ENCODE measurements at regions of chr7 and their contacts with region 1.

Region 1: DNA sequence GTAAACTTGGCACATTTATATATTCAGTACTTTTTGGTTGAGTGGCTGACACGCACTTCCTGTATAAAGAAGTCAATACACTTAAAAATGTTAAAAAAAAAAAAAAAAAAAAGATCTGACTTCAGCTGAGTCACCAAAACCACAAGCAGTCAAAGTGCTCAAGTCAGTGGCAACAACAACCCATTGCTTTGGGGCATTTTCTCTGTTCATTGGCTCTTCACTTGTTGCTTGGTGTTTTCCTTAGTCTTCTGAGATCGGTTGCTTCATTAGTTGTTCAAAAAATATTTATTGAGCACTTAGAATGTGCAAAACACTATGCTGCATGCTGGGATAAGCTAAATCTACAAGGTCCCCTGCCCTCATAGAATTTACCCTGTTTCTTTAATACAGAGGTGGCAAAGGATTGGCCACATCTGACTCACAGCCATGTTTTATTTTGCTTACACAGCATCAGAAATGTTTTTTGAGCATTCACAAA is 63.7 kb downstream of the ZNRF2 start:
- DNase-seq: peak in 13 of 14 experiments; percentile 12 to 93 (median 35)
- ATAC-seq: peak; percentile 88
- H3K4me3 ChIP-seq: peak overlapping the region; percentile 24
- H3K4me3 Mint-ChIP-seq: peak overlapping the region; percentile 31
- H3K27ac ChIP-seq: peak overlapping the region; percentile 7 to 20
- H3K27ac Mint-ChIP-seq: peak overlapping the region; percentile 93
- H3K4me1 ChIP-seq: peaks cover 14% of the 10 kb centered on the region
- H3K4me1 Mint-ChIP-seq: peaks cover 64% of the 10 kb centered on the region
- H3K27me3 ChIP-seq: no peaks in the 10 kb centered on the region
- H3K27me3 Mint-ChIP-seq: no peaks in the 10 kb centered on the region
- CTCF ChIP-seq: no peak

Region 2: DNA sequence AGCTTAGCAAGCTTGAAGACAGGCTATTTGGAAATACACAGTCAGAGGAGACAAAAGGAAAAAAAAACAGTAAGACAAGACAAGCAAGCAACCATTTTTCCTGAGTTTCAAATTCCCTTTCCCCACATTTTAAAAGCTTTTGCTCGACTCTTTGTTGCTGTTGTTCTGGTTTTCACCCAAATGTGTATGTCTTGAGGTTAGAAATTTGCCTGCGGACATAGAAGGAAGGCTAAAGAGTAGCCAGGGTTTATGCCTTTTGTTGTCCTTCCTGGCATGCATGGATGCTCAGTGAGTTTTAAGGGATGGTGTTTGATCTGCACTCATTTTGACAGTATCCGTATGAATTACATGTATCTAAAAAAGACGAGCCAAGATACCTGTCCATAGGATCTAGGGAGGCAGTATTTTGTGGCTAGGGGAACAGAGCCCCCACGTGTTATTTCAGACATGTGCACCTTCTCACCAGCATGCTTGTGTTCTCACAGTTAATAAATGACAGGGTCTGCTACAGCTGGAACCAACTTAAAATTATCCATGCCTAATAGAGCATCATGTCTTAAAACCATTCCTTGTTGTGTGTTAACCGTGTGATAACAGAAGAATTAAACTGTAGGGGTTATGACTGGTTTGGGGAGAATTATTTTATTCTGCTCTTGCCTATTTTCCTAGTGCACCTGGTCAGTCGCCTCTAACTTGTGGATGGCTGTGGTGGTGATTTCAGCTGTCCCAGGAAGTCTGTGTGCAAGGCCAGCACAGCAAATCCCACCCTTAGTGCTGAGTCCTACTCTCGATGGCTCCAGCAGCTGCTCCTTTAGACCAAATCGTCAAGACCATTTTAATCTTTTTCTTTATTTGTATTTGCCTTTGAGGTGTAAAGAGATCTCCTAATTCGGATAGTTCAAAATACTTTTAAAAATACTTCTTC is 532.7 kb before region 1 on chr7:
- CTCF ChIA-PET with region 1: no interaction called
- POLR2A ChIA-PET with region 1: no interaction called
- intact Hi-C with region 1: no loop called
- DNase-seq: no peak
- ATAC-seq: no peak
- H3K4me3 ChIP-seq: no peak overlapping the region
- H3K4me3 Mint-ChIP-seq: no peak overlapping the region
- H3K27ac ChIP-seq: no peak overlapping the region
- H3K27ac Mint-ChIP-seq: no peak overlapping the region
- H3K4me1 ChIP-seq: no peaks in the 10 kb centered on the region
- H3K4me1 Mint-ChIP-seq: no peaks in the 10 kb centered on the region
- H3K27me3 ChIP-seq: peaks cover 7 to 13% of the 10 kb centered on the region in 2 experiments
- H3K27me3 Mint-ChIP-seq: peaks cover 48% of the 10 kb centered on the region
- CTCF ChIP-seq: no peak

Region 3: GRCh38 chr7:30026229-30027064 is 321.7 kb before region 1 on chr7 and contains the start of gene FKBP14:
- CTCF ChIA-PET with region 1: no interaction called
- POLR2A ChIA-PET with region 1: interaction called, 6 read pairs
- intact Hi-C with region 1: loop called (anchors 5 kb)
- DNase-seq: peak; percentile 76 to 97 (median 88)
- ATAC-seq: peak; percentile 82
- H3K4me3 ChIP-seq: peak within 1 kb of the TSS; percentile 70
- H3K4me3 Mint-ChIP-seq: peak within 1 kb of the TSS; percentile 90
- H3K27ac ChIP-seq: peak within 1 kb of the TSS; percentile 36 to 50
- H3K27ac Mint-ChIP-seq: peak within 1 kb of the TSS; percentile 80
- H3K4me1 ChIP-seq: peaks cover 14% of the 10 kb centered on the region
- H3K4me1 Mint-ChIP-seq: peaks cover 42% of the 10 kb centered on the region
- H3K27me3 ChIP-seq: no peaks in the 10 kb centered on the region
- H3K27me3 Mint-ChIP-seq: no peaks in the 10 kb centered on the region
- CTCF ChIP-seq: no peak
- total RNA-seq, gene FKBP14: 4.3 to 5.2 TPM

Region 4: GRCh38 chr7:30164567-30164966 is 183.6 kb before region 1 on chr7:
- CTCF ChIA-PET with region 1: no interaction called
- POLR2A ChIA-PET with region 1: no interaction called
- intact Hi-C with region 1: loop called (anchors 5 to 10 kb)
- DNase-seq: peak in 3 of 14 experiments; percentile 43 to 51 (median 46)
- ATAC-seq: no peak
- H3K4me3 ChIP-seq: no peak overlapping the region
- H3K4me3 Mint-ChIP-seq: no peak overlapping the region
- H3K27ac ChIP-seq: no peak overlapping the region
- H3K27ac Mint-ChIP-seq: no peak overlapping the region
- H3K4me1 ChIP-seq: peaks cover 13% of the 10 kb centered on the region
- H3K4me1 Mint-ChIP-seq: peaks cover 36% of the 10 kb centered on the region
- H3K27me3 ChIP-seq: no peaks in the 10 kb centered on the region
- H3K27me3 Mint-ChIP-seq: no peaks in the 10 kb centered on the region
- CTCF ChIP-seq: peak; percentile 34

Region 5: DNA sequence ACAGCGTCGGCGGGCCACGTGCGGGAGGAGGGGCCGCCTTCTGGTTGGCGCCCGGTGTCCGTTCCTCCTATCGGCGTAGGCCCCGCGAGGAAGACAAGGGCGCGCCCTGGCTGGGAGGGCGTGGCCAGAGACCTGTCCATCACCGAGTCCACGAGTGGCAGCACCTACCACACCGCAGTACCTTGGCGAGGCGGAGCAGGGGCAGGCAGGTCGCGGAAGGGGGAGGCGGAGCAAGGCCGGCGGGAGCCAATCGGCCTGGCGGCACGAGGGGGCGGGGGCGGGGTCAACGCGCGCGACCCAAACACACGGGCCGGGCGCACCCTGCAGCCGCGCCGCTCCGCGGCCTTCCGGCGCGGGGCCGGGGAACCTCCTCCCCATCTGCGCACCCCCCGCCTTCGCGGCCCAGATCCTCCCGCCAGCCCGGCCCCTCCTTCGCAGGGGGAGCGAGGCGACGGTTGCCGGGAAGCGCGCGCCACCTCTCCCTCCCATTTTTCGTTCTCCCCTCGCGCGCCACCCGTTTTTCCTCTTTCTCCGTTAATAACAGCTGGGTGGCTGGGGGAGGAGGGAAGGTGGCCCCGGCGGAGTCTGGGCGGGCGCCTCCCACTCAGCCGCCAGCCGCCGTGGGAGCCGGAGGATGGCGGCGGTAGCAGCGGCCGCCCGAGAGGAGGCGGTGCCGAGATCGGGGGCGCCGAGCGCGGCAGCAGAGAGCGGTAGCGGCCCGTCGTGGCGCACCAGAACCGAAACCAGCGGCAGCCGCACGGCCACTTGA is 63.6 kb before region 1 on chr7 and contains the start of gene ZNRF2:
- CTCF ChIA-PET with region 1: interaction called, 9 read pairs
- POLR2A ChIA-PET with region 1: interaction called, 62 read pairs
- intact Hi-C with region 1: loop called (anchors 1 to 2 kb)
- DNase-seq: peak; percentile 97 to 100 (median 99)
- ATAC-seq: peak; percentile 85
- H3K4me3 ChIP-seq: peak within 1 kb of the TSS; percentile 85
- H3K4me3 Mint-ChIP-seq: peak within 1 kb of the TSS; percentile 94
- H3K27ac ChIP-seq: peak within 1 kb of the TSS; percentile 66 to 78
- H3K27ac Mint-ChIP-seq: peak within 1 kb of the TSS; percentile 94
- H3K4me1 ChIP-seq: peaks cover 7% of the 10 kb centered on the region
- H3K4me1 Mint-ChIP-seq: peaks cover 40% of the 10 kb centered on the region
- H3K27me3 ChIP-seq: no peaks in the 10 kb centered on the region
- H3K27me3 Mint-ChIP-seq: no peaks in the 10 kb centered on the region
- CTCF ChIP-seq: peak; percentile 44
- total RNA-seq, gene ZNRF2: 20.4 to 23.6 TPM

Region 6: DNA sequence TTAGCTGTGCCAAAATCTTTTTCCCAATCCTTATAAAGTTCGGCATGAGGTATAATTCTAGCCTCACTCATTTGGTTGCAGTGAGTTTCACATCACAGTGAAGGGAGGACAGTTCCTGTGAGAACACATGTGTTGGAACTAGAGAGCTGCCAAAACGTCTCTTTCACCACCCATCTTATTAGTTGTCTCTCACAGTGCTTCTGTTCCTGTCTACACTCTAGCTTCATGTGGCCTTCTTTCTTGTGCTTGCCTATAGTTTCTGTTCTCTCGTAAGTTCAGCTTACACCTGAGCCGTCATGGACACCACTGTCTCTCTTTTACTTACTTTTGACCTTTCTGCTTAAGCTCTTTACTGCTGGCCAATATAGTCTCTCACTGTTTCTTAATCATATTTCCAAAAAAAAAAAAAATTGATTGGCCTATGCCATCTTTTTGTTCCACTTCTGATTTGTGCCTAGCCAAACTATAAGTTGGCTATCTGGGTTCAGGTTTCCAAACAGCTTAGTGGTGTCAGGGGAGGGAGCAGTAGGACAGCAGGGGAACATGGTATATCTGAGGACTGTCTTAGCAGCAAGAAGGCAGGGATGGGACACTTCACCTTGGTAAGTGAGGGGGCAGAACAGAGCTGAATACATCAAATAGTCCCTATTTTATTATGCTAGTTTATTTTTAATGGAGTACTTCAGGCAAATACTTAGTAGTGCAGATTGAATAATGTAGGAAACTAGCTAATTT is 25.7 kb before region 1 on chr7:
- CTCF ChIA-PET with region 1: interaction called, 10 read pairs
- POLR2A ChIA-PET with region 1: interaction called, 44 read pairs
- intact Hi-C with region 1: no loop called
- DNase-seq: peak in 5 of 14 experiments; percentile 7 to 71 (median 59)
- ATAC-seq: peak; percentile 78
- H3K4me3 ChIP-seq: peak overlapping the region; percentile 36
- H3K4me3 Mint-ChIP-seq: peak overlapping the region; percentile 88
- H3K27ac ChIP-seq: peak overlapping the region; percentile 70 to 79
- H3K27ac Mint-ChIP-seq: peak overlapping the region; percentile 90
- H3K4me1 ChIP-seq: peaks cover 10% of the 10 kb centered on the region
- H3K4me1 Mint-ChIP-seq: peaks cover 83% of the 10 kb centered on the region
- H3K27me3 ChIP-seq: no peaks in the 10 kb centered on the region
- H3K27me3 Mint-ChIP-seq: no peaks in the 10 kb centered on the region
- CTCF ChIP-seq: no peak

Region 7: DNA sequence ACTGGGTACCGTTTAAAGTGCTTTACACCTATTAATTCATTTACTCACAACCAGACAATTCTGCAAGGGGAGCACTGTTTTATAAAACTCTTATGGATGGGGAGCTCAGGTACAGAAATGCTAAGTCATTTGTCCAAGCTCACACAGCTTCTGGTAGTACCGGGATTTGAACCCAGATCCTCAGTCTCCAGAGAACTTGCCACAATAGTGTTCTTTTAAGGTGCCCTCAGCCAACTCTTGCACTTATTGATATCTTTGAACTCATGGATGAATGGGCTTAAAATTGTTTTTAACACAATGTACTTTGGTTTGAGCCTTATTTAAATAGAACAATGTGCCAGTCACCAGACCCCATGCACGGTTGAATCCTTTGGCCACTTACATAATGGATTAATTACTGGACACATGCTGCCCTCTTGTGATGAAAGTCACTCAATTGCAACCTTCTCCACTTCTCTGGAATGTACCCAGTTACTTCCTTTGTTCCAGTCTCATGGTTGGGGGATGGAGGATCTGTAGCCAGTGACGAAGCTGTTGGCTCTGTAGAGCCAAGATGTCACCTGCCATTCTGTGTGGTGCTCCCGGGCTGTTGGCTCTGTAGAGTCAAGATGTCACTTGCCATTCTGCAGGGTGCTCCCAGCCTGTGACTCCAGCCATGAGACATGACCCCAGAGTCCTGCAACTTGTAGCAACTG is 64.8 kb after region 1 on chr7:
- CTCF ChIA-PET with region 1: no interaction called
- POLR2A ChIA-PET with region 1: no interaction called
- intact Hi-C with region 1: no loop called
- DNase-seq: peak in 4 of 14 experiments; percentile 31 to 64 (median 54)
- ATAC-seq: no peak
- H3K4me3 ChIP-seq: no peak overlapping the region
- H3K4me3 Mint-ChIP-seq: no peak overlapping the region
- H3K27ac ChIP-seq: no peak overlapping the region
- H3K27ac Mint-ChIP-seq: no peak overlapping the region
- H3K4me1 ChIP-seq: no peaks in the 10 kb centered on the region
- H3K4me1 Mint-ChIP-seq: no peaks in the 10 kb centered on the region
- H3K27me3 ChIP-seq: no peaks in the 10 kb centered on the region
- H3K27me3 Mint-ChIP-seq: no peaks in the 10 kb centered on the region
- CTCF ChIP-seq: peak; percentile 58

Region 8: GRCh38 chr7:30504347-30505173 is 156.4 kb after region 1 on chr7 and contains the start of gene GGCT:
- CTCF ChIA-PET with region 1: no interaction called
- POLR2A ChIA-PET with region 1: no interaction called
- intact Hi-C with region 1: loop called in 1 of 2 experiments (anchors 5 kb)
- DNase-seq: peak; percentile 93 to 98 (median 95)
- ATAC-seq: peak; percentile 98
- H3K4me3 ChIP-seq: peak within 1 kb of the TSS; percentile 88
- H3K4me3 Mint-ChIP-seq: peak within 1 kb of the TSS; percentile 94
- H3K27ac ChIP-seq: peak within 1 kb of the TSS; percentile 42 to 57
- H3K27ac Mint-ChIP-seq: peak within 1 kb of the TSS; percentile 74
- H3K4me1 ChIP-seq: peaks cover 19% of the 10 kb centered on the region
- H3K4me1 Mint-ChIP-seq: peaks cover 29% of the 10 kb centered on the region
- H3K27me3 ChIP-seq: no peaks in the 10 kb centered on the region
- H3K27me3 Mint-ChIP-seq: no peaks in the 10 kb centered on the region
- CTCF ChIP-seq: no peak
- total RNA-seq, gene GGCT: 6.3 to 6.6 TPM

Measured in CD4-positive, alpha-beta T cell (primary cell).